ENCODE measurements at regions of chr11 and their contacts with region 1.

Region 1: GRCh38 chr11:33857933-33858371 is 33.9 kb downstream of the LMO2 start:
- DNase-seq: peak; percentile 31
- ATAC-seq: peak; percentile 88
- H3K4me3 ChIP-seq: no peak overlapping the region
- H3K27ac ChIP-seq: no peak overlapping the region
- H3K4me1 ChIP-seq: no peaks in the 10 kb centered on the region
- H3K27me3 ChIP-seq: peaks cover 5 to 52% of the 10 kb centered on the region in 2 experiments
- CTCF ChIP-seq: peak; percentile 86
- EP300 ChIP-seq: no peak
- POLR2A ChIP-seq: no peak
- RAD21 ChIP-seq: peak; percentile 77

Region 2: DNA sequence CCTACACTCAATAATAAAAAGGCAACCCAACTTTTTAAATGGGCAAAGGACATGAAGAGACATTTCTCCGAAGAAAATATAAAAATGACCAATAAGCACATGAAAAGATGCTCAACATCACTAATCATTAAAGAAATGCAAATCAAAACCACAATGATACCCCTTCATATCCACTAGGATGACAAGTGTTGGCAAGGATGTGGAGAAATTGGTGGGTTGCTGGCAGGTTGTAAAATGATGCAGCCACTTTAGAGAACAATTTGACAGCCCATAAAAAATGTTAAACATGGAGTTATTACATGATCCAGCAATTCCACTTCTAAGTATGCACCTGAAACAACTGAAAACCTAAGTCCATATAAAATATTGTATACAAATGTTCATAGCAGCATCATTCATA is 107.1 kb after region 1 on chr11:
- CTCF ChIA-PET with region 1: no interaction called
- POLR2A ChIA-PET with region 1: no interaction called
- in situ Hi-C with region 1: loop called (anchors 5 kb)
- intact Hi-C with region 1: no loop called
- DNase-seq: no peak
- ATAC-seq: no peak
- H3K4me3 ChIP-seq: no peak overlapping the region
- H3K27ac ChIP-seq: no peak overlapping the region
- H3K4me1 ChIP-seq: no peaks in the 10 kb centered on the region
- H3K27me3 ChIP-seq: peaks cover 2 to 7% of the 10 kb centered on the region in 2 experiments; a peak in 2 of 5 replicates
- CTCF ChIP-seq: no peak
- EP300 ChIP-seq: no peak
- POLR2A ChIP-seq: no peak
- RAD21 ChIP-seq: no peak

Region 3: DNA sequence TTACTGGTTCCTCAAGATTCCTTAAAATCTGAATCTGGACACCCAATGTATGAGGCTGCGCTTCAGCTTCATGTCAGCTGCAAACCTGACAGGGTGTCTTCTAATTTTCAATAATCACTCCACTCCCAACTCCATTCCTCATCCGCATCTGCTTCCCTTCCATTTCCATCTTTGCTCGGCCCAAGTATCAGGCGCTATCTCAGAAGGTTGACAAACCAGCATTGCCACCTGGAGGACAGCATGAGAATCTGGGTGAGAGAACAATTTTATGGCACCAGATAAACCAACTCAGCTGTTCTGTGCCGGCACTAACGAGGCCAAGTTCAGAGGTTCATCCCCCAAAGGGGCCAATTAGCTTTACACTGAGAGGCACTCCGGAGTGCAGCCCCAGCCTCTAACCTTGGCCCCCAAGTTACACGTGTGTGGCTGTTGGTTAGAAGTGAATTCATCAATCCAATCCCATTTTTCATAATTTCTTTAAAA is 113.1 kb after region 1 on chr11:
- CTCF ChIA-PET with region 1: interaction called, 31 read pairs
- POLR2A ChIA-PET with region 1: no interaction called
- in situ Hi-C with region 1: loop called (anchors 5 kb)
- intact Hi-C with region 1: loop called (anchors 1 kb)
- DNase-seq: peak; percentile 46
- ATAC-seq: peak; percentile 97
- H3K4me3 ChIP-seq: no peak overlapping the region
- H3K27ac ChIP-seq: no peak overlapping the region
- H3K4me1 ChIP-seq: peaks cover 7% of the 10 kb centered on the region; the same call in 1 of the 2 replicates
- H3K27me3 ChIP-seq: peaks cover 2 to 10% of the 10 kb centered on the region in 2 experiments; a peak in 3 of 5 replicates
- CTCF ChIP-seq: peak; percentile 84
- EP300 ChIP-seq: no peak
- POLR2A ChIP-seq: no peak
- RAD21 ChIP-seq: peak; percentile 66

Region 4: DNA sequence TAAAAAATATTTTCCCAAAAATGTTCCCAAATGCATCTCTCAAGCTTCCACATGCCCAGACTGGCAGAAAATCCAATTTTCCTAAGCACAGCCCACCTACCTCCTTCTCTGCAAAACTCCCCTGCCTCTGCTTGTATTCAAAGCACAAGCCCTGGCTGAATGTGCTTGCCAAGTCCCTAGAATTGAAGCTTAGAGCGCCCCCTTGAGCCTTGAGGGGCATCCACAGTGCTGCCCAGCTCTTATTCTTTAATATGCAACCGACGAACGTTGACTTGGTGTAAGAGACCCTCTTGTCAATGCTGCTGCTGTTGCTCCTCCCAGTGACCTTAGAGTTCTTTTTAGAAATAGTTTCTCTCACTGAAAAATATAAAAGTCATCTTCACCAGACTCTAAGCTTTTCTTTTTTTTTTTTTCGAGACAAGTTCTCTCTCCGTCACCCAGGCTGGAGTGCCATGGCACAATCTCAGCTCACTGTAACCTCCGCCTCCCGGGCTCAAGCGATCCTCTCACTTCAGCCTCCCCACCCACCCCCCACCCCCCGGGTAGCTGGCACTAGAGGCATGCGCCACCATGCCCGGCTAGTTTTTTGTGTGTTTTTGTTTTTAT is 130.1 kb after region 1 on chr11:
- CTCF ChIA-PET with region 1: interaction called, 5 read pairs
- POLR2A ChIA-PET with region 1: no interaction called
- in situ Hi-C with region 1: no loop called
- intact Hi-C with region 1: loop called (anchors 1 kb)
- DNase-seq: peak; percentile 72
- ATAC-seq: peak; percentile 94
- H3K4me3 ChIP-seq: no peak overlapping the region
- H3K27ac ChIP-seq: no peak overlapping the region
- H3K4me1 ChIP-seq: no peaks in the 10 kb centered on the region
- H3K27me3 ChIP-seq: no peaks in the 10 kb centered on the region
- CTCF ChIP-seq: peak; percentile 68
- EP300 ChIP-seq: no peak
- POLR2A ChIP-seq: no peak
- RAD21 ChIP-seq: peak; percentile 31; the same call in 1 of the 2 replicates

Region 5: DNA sequence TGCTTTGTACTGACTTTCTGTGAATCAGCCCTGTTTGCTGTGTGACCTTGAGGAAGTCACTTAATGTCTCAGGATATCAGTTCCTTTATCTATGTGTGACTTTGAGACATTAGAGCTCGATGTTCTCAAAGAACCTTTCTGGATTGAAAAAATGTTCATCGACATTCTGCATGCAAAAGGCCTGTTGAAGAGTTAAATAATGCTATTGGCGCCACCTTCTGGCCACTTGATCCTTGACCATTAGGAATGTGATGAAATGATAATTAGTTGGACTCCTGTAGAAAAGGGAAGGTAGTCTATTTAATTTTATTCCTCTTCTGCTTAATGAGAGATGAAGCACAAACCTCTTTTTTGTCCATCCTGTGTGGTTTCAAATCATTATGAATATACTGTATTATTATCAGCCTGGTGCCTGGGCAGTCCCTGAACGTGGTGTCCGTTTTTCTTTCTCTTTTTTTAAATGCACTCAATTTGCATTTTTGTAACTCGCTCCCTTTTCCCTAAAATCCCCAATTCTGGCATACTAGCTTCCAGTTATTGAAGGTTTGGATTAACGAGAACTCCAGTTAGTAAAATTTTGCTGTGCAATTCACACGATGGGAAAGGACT is 635.0 kb after region 1 on chr11:
- CTCF ChIA-PET with region 1: no interaction called
- POLR2A ChIA-PET with region 1: no interaction called
- in situ Hi-C with region 1: loop called (anchors 10 kb)
- intact Hi-C with region 1: no loop called
- DNase-seq: peak; percentile 68
- ATAC-seq: peak; percentile 49
- H3K4me3 ChIP-seq: no peak overlapping the region
- H3K27ac ChIP-seq: no peak overlapping the region
- H3K4me1 ChIP-seq: peaks cover 43% of the 10 kb centered on the region
- H3K27me3 ChIP-seq: no peaks in the 10 kb centered on the region
- CTCF ChIP-seq: peak; percentile 80
- EP300 ChIP-seq: no peak
- POLR2A ChIP-seq: no peak
- RAD21 ChIP-seq: peak; percentile 58; the same call in 1 of the 2 replicates

Region 6: GRCh38 chr11:34899633-34900016 is 1041.7 kb after region 1 on chr11:
- CTCF ChIA-PET with region 1: no interaction called
- POLR2A ChIA-PET with region 1: no interaction called
- in situ Hi-C with region 1: no loop called
- intact Hi-C with region 1: loop called (anchors 5 kb)
- DNase-seq: no peak
- ATAC-seq: no peak
- H3K4me3 ChIP-seq: no peak overlapping the region
- H3K27ac ChIP-seq: no peak overlapping the region
- H3K4me1 ChIP-seq: peaks cover 9% of the 10 kb centered on the region
- H3K27me3 ChIP-seq: no peaks in the 10 kb centered on the region
- CTCF ChIP-seq: no peak
- EP300 ChIP-seq: no peak
- POLR2A ChIP-seq: no peak
- RAD21 ChIP-seq: no peak

Measured in HepG2 (cell line).